Motor neuron (in vitro differentiated cells): ENCODE measurements at regions of chr22 and their contacts with region 1.

Region 1: GRCh38 chr22:33920927-33921524 is 750 bp upstream of the LARGE1 start:
- ATAC-seq: peak; percentile 74 to 87 (median 80)
- H3K4me3 ChIP-seq: peak overlapping the region; percentile 60 to 94 (median 66)
- H3K27ac ChIP-seq: peak overlapping the region; percentile 80 to 83
- H3K4me1 ChIP-seq: peaks cover 25 to 32% of the 10 kb centered on the region in 2 donors

Region 2: GRCh38 chr22:33519071-33519973 is 401.7 kb before region 1 on chr22:
- in situ Hi-C with region 1: loop called in 3 of 9 experiments (anchors 25 kb)
- ATAC-seq: peak; percentile 43 to 93 (median 80)
- H3K4me3 ChIP-seq: no peak overlapping the region
- H3K27ac ChIP-seq: no peak overlapping the region
- H3K4me1 ChIP-seq: peaks cover 21% of the 10 kb centered on the region in 2 donors

Region 3: DNA sequence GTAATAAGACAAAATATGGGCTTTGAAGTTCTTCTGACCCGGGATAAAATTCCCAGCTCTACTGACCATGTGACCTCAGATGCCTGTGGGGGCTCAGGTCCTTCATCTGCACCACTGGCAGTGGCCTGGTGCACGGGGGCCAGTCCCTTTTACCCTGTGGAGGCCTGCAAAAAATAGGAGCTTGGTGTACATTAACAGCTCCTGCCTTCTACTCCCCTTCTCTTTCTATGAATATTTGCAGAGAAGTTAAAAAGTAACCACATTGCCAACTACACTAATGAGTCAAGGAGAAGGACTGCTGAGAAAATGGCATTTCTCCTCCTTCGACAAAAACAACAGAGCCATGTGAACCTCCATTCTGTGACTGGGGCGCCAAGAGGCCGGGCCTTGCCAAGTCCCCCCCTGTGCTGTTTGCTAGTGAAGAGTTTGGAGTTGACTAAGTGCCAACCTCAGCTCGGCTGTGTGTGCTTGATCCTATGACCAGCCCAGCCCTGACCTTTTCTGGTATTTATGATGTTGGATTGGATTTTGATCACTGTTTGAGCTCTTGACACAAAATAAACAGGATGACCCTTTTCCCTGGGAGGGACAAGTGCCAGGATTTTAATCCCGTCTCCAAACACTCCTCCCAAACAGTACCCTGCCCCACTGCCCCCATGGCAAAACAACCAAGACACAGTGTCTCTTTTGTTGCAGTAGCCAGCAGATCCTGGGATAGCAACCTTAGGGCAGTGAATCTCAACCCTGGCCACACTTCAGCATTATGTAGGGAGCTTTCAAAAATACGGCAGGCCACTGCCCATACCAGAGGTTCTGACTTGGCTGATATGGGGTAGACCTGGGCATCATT is 380.9 kb before region 1 on chr22:
- in situ Hi-C with region 1: loop called in 1 of 9 experiments (anchors 25 kb)
- ATAC-seq: peak in 3 of 8 experiments; percentile 38 to 86 (median 66)
- H3K4me3 ChIP-seq: no peak overlapping the region
- H3K27ac ChIP-seq: no peak overlapping the region
- H3K4me1 ChIP-seq: peaks cover 7% of the 10 kb centered on the region in 2 donors